ENCODE measurements at regions of chr17 and their contacts with region 1.

Region 1: DNA sequence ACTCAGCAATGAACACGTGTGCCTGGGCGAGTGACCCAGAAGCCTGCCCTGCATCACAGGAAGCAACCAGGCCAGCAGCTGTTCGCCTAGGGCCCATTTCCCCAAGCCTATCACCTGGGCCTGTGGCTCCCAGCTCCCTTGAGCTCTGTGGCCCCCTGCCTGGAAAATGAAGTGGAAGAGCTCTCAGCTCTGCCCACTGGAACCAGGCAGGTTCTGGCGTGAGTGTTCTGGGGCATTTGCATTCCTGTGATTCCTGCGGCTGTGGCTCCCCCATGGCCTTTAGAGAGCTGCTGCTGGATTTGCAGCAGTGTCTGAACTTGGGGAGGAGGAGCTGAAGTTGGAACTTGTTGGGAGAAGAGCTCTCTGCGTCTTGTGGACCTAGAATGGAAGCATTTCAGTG is 22.8 kb downstream of the PGS1 start:
- DNase-seq: no peak
- ATAC-seq: no peak
- H3K4me3 ChIP-seq: no peak overlapping the region
- H3K27ac ChIP-seq: no peak overlapping the region
- H3K4me1 ChIP-seq: no peaks in the 10 kb centered on the region
- H3K27me3 ChIP-seq: no peaks in the 10 kb centered on the region
- CTCF ChIP-seq: no peak

Region 2: DNA sequence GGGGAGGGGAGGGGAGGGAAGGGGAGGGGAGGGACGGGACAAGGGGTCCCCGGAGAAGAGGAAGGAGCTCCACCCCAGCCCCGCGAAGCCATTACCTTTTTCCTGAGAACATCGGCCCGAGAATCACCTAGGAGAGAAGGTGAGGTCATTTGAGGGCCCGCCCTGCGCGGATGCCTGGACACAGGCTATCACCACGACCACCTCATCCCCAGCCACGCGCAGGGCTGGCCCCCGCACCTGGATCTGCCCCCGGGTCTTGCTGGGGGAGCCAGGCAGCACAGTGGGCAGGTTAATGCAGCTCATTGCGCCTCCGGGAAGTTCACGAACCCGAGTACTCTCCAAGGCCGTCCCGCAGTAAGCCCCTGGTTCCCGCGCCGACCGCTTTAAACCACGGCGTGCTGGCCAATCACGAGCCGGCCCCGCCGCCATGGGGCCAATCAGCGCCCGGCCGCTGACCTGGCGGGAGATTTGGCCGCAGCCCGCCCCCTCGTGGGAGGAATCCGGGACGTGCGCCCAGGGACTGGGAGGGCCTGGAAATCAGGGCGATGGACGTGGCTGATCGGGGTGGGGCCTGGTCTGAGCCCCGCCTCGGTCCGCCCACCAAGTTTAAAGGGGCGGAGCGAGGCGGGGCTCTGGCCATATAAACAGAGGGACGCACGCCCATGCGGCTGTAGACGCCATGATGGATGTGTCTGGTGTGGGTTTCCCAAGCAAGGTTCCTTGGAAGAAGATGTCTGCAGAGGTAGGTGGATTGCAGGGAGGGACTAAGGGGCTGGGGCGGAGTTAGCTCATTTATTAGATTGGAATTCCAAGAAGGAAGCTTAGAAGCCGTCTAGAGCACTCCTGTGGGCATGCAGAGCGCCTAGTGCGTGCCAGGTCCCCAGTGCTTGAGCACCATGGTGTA is 214.3 kb before region 1 on chr17 and contains the starts of genes AFMID and TK1:
- CTCF ChIA-PET with region 1: interaction called, 10 read pairs
- POLR2A ChIA-PET with region 1: no interaction called
- in situ Hi-C with region 1: no loop called
- intact Hi-C with region 1: no loop called
- DNase-seq: peak; percentile 74
- ATAC-seq: peak; percentile 96
- H3K4me3 ChIP-seq: peak within 1 kb of the TSS; percentile 65 to 86
- H3K27ac ChIP-seq: peak within 1 kb of the TSS; percentile 84
- H3K4me1 ChIP-seq: peaks cover 26% of the 10 kb centered on the region
- H3K27me3 ChIP-seq: no peaks in the 10 kb centered on the region
- CTCF ChIP-seq: no peak; the same call in 1 of the 2 replicates
- total RNA-seq, gene AFMID: 59.3 TPM
- total RNA-seq, gene TK1: 153 TPM

Region 3: DNA sequence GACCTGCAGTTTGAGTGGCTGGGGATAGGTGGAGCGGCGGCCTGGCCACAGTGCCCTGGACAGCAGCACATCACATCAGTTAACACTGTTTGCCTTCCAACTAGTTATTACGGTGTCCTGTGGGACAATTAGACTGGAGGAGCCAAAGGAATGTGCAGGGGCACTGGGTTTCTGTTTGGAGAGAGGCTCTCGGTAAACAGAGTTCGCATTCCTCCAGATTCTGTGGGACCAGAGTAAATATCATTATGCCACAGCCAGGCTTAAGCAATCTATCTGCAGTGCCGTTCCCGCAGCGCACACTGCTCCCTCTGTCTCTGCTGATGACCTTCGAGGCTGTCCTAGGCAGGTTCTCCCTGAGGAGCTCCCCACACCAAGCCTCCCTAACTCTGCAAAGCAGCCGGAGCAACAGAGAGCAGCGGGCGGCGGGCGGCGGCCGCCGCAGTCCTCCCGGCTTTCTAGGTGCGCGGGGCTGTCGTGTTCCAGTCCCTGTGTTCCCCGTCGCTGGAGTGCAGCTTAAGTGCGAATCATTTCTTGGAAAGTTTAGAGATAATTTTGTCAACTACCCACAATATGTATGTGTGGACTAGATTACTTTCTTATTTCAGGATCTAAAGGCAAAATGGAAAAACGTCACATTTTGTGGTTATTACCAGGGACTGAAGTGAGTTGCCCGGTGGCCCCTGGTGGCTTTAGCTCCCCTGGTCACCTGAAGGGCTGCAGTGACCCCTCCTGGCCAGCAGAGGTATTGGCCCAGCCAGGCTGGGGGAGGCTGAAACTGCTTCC is 20.4 kb after region 1 on chr17:
- CTCF ChIA-PET with region 1: interaction called, 3 read pairs
- POLR2A ChIA-PET with region 1: interaction called, 10 read pairs
- in situ Hi-C with region 1: no loop called
- intact Hi-C with region 1: no loop called
- DNase-seq: peak; percentile 51
- ATAC-seq: peak; percentile 88
- H3K4me3 ChIP-seq: no peak overlapping the region
- H3K27ac ChIP-seq: peak overlapping the region; percentile 6; the same call in 1 of the 2 replicates
- H3K4me1 ChIP-seq: peaks cover 12% of the 10 kb centered on the region; the same call in 1 of the 2 replicates
- H3K27me3 ChIP-seq: no peaks in the 10 kb centered on the region
- CTCF ChIP-seq: peak; percentile 99

Region 4: GRCh38 chr17:78557598-78558039 is 156.4 kb after region 1 on chr17:
- CTCF ChIA-PET with region 1: no interaction called
- POLR2A ChIA-PET with region 1: no interaction called
- in situ Hi-C with region 1: no loop called
- intact Hi-C with region 1: no loop called
- DNase-seq: no peak
- ATAC-seq: peak; percentile 29; the same call in 1 of the 2 replicates
- H3K4me3 ChIP-seq: no peak overlapping the region
- H3K27ac ChIP-seq: no peak overlapping the region
- H3K4me1 ChIP-seq: no peaks in the 10 kb centered on the region
- H3K27me3 ChIP-seq: no peaks in the 10 kb centered on the region
- CTCF ChIP-seq: no peak

Measured in Panc1 (cell line).